ENCODE measurements at regions of chr1 and their contacts with region 1.

Region 1: GRCh38 chr1:202498542-202498941 is 150.0 kb downstream of the PPP1R12B start:
- DNase-seq: no peak
- H3K4me3 ChIP-seq: no peak overlapping the region
- H3K27ac ChIP-seq: no peak overlapping the region
- H3K4me1 ChIP-seq: no peaks in the 10 kb centered on the region
- H3K27me3 ChIP-seq: no peaks in the 10 kb centered on the region
- CTCF ChIP-seq: no peak
- POLR2A ChIP-seq: no peak

Region 2: DNA sequence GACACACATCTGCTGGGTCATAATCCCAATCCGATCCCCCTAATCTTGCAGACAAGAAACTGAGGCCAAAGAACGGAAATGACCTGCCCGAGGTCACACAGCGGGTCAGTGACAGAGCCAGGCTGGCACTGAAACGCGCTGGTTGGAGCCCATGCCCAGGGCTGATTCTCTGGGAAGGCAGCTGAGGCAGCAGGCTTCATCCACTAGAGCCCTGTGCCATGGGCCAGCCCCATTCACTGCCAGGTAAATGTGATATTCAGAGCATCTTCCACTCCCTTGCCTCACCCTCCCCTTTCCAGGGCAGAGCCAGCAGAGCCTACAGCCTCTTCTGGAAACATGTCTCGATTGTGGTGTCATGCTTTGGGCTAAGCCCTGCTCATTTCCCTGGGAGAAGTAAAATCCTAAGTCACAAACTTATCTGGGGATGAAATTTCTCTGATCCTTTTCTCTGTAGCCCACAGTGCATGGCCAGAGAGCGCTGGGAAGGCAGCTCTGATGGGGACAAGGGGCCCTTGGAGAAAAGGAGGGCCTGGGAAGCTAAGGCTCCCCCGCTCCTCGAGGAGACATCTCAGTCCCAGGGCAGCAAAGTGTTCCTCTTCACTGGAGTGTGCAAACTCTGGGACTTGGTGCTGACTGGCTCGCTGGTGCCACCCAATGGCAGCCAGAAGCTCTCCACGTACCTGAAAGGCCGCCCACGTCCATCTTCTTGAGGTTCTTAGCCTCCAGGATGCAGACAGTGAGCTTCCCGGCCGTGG is 101.3 kb after region 1 on chr1:
- intact Hi-C with region 1: loop called (anchors 10 kb)
- DNase-seq: no peak
- H3K4me3 ChIP-seq: no peak overlapping the region
- H3K27ac ChIP-seq: peak overlapping the region in 3 of 4 donors; percentile 32 to 57 (median 34)
- H3K4me1 ChIP-seq: peaks cover 3 to 8% (median 5%) of the 10 kb centered on the region in 3 donors
- H3K27me3 ChIP-seq: no peaks in the 10 kb centered on the region
- CTCF ChIP-seq: peak in 5 of 6 experiments; percentile 58 to 82 (median 67)
- POLR2A ChIP-seq: no peak

Region 3: DNA sequence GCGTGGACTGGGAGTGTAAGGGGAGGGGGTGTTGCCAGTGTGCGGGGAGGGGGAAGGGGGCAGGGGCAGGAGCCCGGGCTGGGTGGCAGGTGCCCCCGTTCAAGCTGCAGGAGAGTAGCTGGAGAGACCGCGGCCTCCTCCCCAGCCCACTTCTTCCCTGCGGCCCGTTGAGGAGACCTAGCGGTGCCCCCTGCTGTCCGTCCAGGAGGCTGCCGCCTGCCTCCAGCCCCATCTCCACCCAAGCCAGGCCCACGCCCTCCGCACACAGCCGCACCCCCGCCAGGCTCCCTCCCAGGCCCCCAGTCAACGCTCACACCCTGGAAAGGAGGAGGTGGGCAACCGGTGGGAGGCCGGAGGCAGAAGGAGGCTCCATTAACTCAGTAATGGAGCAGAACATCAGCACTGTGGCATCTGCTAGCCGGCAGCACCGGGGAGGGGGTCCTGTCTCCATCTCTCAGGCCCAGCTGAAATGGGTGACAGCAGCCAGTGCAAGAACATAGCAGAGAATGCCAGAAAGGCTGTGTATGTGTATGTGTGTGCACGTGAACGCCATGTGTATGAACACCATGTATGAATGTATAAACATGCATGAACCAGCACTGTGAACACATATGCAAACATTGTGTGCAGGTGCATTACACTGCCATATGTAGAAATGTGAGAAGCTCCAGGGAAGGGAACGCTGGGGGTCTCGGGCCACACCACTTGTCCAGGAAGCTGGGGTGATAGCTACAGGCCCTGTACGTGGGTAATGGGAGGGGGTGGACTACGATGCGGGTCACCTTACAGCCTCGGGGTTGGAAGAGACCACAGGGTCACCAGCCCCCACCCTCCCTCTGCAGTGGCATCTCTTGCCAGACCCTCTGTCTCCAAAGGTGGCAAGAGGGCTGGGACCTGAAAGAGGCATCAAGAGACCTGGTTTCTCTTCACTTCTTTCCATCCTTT is 127.1 kb after region 1 on chr1:
- intact Hi-C with region 1: no loop called
- DNase-seq: no peak
- H3K4me3 ChIP-seq: no peak overlapping the region
- H3K27ac ChIP-seq: no peak overlapping the region
- H3K4me1 ChIP-seq: peaks cover 0 to 23% (median 8%) of the 10 kb centered on the region in 3 donors
- H3K27me3 ChIP-seq: peaks cover 0 to 55% (median 0%) of the 10 kb centered on the region in 4 donors
- CTCF ChIP-seq: peak in 5 of 6 experiments; percentile 47 to 68 (median 57)
- POLR2A ChIP-seq: no peak

Region 4: GRCh38 chr1:202760589-202760988 is 262.0 kb after region 1 on chr1:
- intact Hi-C with region 1: no loop called
- DNase-seq: no peak
- H3K4me3 ChIP-seq: no peak overlapping the region
- H3K27ac ChIP-seq: no peak overlapping the region
- H3K4me1 ChIP-seq: no peaks in the 10 kb centered on the region
- H3K27me3 ChIP-seq: no peaks in the 10 kb centered on the region
- CTCF ChIP-seq: no peak
- POLR2A ChIP-seq: no peak

Measured in esophagus squamous epithelium (tissue), 5 donors.